ENCODE measurements at regions of chr11 and their contacts with region 1.

Region 1: GRCh38 chr11:64688534-64688982 is 34.4 kb downstream of the NRXN2 start:
- DNase-seq: peak; percentile 94
- ATAC-seq: peak; percentile 96

Region 2: DNA sequence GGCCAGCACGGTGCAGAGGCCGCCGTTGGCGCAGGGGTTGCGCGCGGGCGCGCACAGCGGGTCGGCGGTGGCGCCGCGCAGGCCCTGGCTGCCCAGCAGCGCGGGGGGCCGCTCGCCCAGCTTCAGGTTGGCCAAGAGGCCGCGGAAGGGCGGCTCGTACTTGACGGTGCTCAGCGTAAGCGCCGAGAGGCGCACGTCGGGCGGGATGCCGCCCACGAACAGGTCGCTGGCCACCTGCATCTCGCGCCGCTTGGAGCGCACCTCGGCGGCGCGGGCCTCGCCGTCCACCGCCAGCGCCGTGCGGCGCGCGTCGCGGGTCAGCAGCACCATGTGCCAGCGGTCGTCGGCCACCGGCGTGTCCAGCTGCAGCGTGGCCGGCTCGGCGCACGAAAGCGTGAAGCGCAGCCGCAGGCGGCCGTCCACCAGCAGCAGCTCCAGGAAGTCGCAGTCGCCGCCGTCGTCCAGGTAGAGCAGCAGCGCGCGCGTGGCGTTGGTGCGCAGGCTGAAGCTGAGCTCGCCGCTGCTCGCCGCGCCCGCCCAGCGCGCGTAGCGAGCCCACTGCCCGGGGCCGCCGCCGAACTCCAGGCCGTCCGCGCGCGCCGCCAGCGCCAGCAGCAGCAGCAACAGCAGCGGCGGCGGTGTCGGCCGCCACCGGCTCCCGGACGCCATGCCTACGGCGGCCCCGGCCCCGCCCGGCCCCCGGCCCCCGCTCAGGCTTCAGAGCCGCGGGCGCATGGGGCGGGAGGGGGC is 24.6 kb after region 1 on chr11:
- intact Hi-C with region 1: no loop called
- DNase-seq: no peak
- ATAC-seq: peak; percentile 43

Region 3: DNA sequence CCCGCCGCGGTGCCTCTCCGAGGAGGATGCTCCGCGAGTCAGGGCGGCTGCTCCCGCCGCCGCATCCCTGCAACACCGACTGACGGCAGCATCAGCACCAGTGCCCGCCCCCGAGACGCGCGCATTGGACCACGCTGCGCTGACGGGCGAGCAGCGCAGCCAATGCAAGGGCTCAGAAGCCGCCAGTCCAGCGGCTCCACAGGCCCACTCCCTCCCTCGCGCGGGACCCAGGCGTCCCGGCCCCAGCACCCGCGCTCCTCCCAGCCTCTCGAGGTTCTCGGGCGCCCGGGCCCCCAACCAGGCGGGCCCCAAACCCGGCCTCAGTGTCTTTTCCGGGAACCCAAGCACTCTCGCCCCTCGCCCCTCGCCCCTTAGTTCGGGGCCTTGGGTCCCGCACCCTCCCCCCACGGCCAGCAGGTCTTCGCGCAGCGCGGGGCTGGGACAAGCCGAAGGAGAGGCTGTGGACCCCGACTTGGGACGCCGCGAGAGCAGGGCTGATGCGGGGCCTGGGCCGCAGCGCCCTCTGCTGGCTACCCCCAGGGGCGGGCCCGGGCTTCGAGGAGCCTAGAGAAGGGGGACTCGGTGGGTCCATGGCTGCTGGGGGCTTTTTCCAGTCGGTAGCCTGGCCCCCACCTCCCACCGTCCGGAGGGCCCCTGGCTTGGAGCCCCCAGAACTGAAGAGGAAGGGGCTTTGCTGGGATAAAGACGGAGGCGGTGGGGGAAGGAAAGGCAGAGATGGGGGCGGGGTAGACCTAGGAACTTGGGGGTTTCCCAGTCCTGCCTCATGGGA is 34.8 kb after region 1 on chr11 and contains the start of gene NRXN2:
- intact Hi-C with region 1: loop called (anchors 5 kb)
- DNase-seq: peak; percentile 92
- ATAC-seq: peak; percentile 98
- total RNA-seq, gene NRXN2: 0.86 TPM